HepG2 (cell line): ENCODE measurements at regions of chr1 and their contacts with region 1.

Region 1: DNA sequence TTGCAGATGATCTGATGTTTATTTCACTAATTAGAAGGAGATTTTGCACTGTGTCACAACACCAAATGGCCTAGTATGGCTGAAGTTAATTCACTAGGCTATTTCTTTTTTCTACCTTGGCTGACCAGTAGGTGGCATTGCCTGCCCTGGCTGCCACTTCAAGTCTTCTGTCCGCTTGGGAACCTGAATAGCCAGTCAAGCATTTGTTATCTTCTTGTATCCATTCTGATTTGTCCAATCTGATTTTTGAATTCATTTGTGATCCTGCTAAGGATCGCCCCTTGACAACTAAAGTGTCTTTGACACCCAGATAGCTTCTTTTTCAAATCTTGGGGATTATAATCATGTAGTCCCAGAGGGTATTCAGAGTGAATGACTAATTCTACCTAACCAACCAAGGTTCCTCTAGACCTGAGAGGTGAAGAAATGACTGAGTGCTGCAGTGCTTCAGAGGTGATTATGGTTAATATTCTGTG is 99.4 kb downstream of the GIPC2 start:
- DNase-seq: peak; percentile 56
- ATAC-seq: peak; percentile 85
- H3K4me3 ChIP-seq: no peak overlapping the region
- H3K27ac ChIP-seq: no peak overlapping the region
- H3K4me1 ChIP-seq: peaks cover 18% of the 10 kb centered on the region
- H3K27me3 ChIP-seq: no peaks in the 10 kb centered on the region
- CTCF ChIP-seq: peak; percentile 83
- EP300 ChIP-seq: no peak
- POLR2A ChIP-seq: no peak
- RAD21 ChIP-seq: peak; percentile 54

Region 2: DNA sequence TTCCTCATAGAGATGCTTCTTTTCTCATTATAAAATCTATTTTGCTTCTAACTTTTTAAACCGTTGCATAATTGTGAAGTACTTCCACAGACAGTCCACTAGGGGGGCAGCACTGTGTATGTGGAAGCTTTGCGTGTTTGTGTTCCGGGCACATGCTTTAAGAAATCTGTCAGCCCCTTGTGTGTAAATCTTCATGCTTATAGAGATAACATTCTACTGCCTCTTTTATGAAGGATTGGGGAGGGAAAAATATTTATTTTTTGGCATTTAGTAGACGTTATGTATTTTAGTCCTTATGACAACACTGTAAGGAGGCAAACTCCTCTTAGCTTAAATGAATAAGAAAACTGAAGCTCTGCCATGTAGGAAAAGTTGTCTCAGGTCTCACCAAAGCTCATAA is 188.4 kb after region 1 on chr1:
- CTCF ChIA-PET with region 1: no interaction called
- POLR2A ChIA-PET with region 1: no interaction called
- in situ Hi-C with region 1: no loop called
- intact Hi-C with region 1: loop called (anchors 10 kb)
- DNase-seq: peak; percentile 16
- ATAC-seq: peak; percentile 82
- H3K4me3 ChIP-seq: no peak overlapping the region
- H3K27ac ChIP-seq: no peak overlapping the region
- H3K4me1 ChIP-seq: no peaks in the 10 kb centered on the region
- H3K27me3 ChIP-seq: no peaks in the 10 kb centered on the region
- CTCF ChIP-seq: peak; percentile 48
- EP300 ChIP-seq: no peak
- POLR2A ChIP-seq: no peak
- RAD21 ChIP-seq: no peak

Region 3: GRCh38 chr1:78570539-78570938 is 425.4 kb after region 1 on chr1:
- CTCF ChIA-PET with region 1: no interaction called
- POLR2A ChIA-PET with region 1: no interaction called
- in situ Hi-C with region 1: no loop called
- intact Hi-C with region 1: loop called (anchors 1 kb)
- DNase-seq: peak; percentile 1
- ATAC-seq: peak; percentile 80
- H3K4me3 ChIP-seq: no peak overlapping the region
- H3K27ac ChIP-seq: no peak overlapping the region
- H3K4me1 ChIP-seq: peaks cover 8% of the 10 kb centered on the region; the same call in 1 of the 2 replicates
- H3K27me3 ChIP-seq: no peaks in the 10 kb centered on the region
- CTCF ChIP-seq: peak; percentile 26; the same call in 1 of the 2 replicates
- EP300 ChIP-seq: no peak
- POLR2A ChIP-seq: no peak
- RAD21 ChIP-seq: no peak

Region 4: DNA sequence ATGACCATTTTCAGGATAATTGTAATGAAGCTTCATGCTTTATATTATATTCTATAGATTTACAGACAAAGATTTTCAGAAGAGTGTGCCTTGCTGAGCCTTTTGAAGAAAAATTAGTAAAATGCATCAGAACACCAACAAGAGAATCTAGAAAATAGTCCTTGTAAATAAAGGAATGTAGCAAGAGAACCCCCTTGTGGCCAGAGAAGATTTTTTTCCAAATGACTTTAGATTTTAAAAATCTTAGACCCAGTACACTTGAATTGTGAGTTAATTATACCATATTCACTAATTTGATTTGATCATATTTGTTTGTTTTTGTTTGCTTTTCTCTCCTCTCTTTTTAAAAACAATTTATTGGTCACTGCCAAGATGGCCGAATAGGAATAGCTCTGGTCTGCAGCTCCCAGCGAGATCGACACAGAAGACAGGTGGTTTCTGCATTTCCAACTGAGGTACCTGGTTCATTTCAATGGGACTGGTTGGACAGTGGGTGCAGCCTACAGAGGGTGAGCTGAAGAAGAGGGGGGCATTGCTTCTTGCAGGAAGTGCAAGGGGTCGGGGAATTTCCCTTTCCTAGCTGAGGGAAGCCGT is 462.3 kb after region 1 on chr1:
- CTCF ChIA-PET with region 1: interaction called, 5 read pairs
- POLR2A ChIA-PET with region 1: no interaction called
- in situ Hi-C with region 1: loop called (anchors 10 kb)
- intact Hi-C with region 1: loop called (anchors 1 kb)
- DNase-seq: no peak
- ATAC-seq: peak; percentile 67
- H3K4me3 ChIP-seq: peak overlapping the region; percentile 35 to 67 (median 54); a peak in 5 of 6 replicates
- H3K27ac ChIP-seq: no peak overlapping the region
- H3K4me1 ChIP-seq: peaks cover 16% of the 10 kb centered on the region; the same call in 1 of the 2 replicates
- H3K27me3 ChIP-seq: no peaks in the 10 kb centered on the region
- CTCF ChIP-seq: no peak; the same call in 1 of the 2 replicates
- EP300 ChIP-seq: no peak
- POLR2A ChIP-seq: no peak
- RAD21 ChIP-seq: no peak